ENCODE measurements at regions of chr11 and their contacts with region 1.

Region 1: DNA sequence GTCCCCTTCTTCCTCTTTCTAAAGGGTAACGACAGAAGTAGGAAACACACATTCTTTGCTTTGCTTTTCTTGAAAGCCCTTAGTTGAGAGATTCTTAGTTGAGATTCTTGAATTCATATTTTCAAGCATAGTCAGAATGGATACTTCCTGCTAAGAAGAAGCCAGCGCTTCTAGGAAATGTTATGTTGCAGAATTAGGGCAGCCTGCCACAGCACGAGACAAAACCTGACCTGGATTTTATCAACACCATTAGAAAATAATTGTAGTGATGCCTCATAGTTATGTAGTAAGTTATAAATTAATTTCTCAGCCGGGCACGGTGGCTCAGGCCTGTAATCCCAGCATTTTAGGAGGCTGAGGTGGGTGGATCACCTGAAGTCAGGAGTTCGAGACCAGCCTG is 37.9 kb upstream of the NUP160 start:
- DNase-seq: no peak
- H3K4me3 ChIP-seq: no peak overlapping the region
- H3K27ac ChIP-seq: no peak overlapping the region
- H3K27me3 ChIP-seq: no peaks in the 10 kb centered on the region
- CTCF ChIP-seq: no peak

Region 2: GRCh38 chr11:47946682-47947575 is 60.8 kb after region 1 on chr11:
- intact Hi-C with region 1: loop called in 1 of 2 experiments (anchors 10 kb)
- DNase-seq: peak in 4 of 10 donors; percentile 33 to 68 (median 42)
- H3K4me3 ChIP-seq: no peak overlapping the region
- H3K27ac ChIP-seq: no peak overlapping the region
- H3K27me3 ChIP-seq: no peaks in the 10 kb centered on the region
- CTCF ChIP-seq: no peak